ENCODE measurements at regions of chr2 and their contacts with region 1.

Region 1: DNA sequence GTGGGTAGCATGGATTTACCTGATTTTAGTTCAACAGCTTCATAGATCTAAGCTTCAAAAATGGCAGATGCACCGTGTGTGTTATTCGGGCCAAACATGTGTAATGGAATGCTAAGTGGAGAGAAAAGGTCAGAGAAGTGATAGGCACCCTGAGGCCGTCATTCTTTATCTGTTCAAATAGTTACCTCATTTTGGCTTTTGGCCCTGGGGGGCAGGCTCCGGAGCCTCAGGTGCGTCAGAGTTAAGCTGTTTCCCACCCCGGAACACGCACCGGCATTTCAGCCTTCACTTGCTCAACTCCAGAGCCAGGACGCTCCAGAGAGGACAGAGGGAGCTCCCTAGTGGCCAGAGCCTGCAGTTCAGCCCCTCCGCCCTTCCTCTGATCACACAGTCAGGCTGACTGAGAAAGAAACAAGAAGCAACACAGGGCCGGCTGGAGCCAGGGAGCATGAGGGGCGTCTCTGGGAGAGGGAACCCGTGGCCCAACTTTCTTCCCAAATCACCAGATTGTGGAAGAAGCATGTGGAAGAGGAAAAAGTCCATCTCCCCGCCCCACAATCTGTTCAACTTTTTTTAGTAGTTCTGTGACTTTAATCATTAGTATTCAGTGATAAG is 135.2 kb upstream of the EPC2 start:
- DNase-seq: peak; percentile 93
- ATAC-seq: peak; percentile 100
- H3K4me3 Mint-ChIP-seq: peak overlapping the region; percentile 56
- H3K27ac Mint-ChIP-seq: peak overlapping the region; percentile 20
- H3K4me1 Mint-ChIP-seq: peaks cover 23% of the 10 kb centered on the region
- H3K27me3 Mint-ChIP-seq: no peaks in the 10 kb centered on the region

Region 2: GRCh38 chr2:147937744-147938349 is 571.5 kb before region 1 on chr2:
- CTCF ChIA-PET with region 1: interaction called, 11 read pairs
- DNase-seq: no peak
- ATAC-seq: peak; percentile 47
- H3K4me3 Mint-ChIP-seq: no peak overlapping the region
- H3K27ac Mint-ChIP-seq: no peak overlapping the region
- H3K4me1 Mint-ChIP-seq: no peaks in the 10 kb centered on the region
- H3K27me3 Mint-ChIP-seq: no peaks in the 10 kb centered on the region

Region 3: DNA sequence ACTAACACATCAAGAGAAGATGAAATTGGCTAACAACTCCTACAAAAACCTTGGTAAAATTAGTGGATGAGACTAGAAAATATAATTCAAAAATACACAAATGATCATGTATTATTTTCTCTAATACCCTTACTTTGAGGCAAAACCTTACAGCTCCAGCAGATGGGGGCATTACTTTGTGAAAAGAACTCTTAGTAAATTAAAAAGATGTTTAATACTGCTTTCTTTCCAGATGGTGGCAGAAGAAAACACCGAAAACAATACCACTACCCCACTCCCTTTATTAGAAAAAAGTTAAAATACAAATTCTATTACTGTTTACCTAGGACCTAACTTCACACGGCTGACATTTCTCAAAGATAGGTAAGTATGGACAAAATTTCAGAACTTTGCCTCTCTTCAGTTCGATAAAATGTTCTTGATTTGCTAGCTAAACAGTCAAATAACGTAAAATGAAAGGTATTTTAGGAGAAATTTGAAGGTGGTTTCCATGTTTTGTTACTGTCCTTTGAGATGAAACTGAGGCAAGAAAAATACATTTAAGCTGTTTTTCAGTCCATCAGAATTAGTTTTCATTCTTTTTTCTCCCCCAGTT is 519.5 kb before region 1 on chr2:
- CTCF ChIA-PET with region 1: interaction called, 43 read pairs
- DNase-seq: no peak
- ATAC-seq: no peak
- H3K4me3 Mint-ChIP-seq: no peak overlapping the region
- H3K27ac Mint-ChIP-seq: no peak overlapping the region
- H3K4me1 Mint-ChIP-seq: peaks cover 7% of the 10 kb centered on the region
- H3K27me3 Mint-ChIP-seq: no peaks in the 10 kb centered on the region

Region 4: DNA sequence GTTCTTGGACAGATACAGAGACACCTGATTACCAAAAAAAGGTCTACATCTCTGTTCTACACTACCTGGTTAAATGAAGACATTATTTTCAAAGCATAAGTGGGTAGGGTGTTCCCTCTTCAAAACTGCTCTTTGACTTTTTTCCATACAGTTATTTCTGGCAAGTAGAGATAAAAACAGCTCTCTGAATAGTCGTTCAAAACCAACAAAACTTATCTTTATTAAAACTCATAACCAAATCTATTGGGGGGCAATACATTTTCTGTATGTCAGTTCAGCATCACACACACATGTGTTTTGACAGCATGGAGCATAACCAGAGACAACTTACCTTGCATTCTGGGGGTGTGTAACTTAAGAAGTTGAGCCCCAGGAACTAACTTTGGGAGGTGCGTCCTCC is 13.8 kb before region 1 on chr2:
- CTCF ChIA-PET with region 1: interaction called, 19 read pairs
- DNase-seq: no peak
- ATAC-seq: no peak
- H3K4me3 Mint-ChIP-seq: no peak overlapping the region
- H3K27ac Mint-ChIP-seq: no peak overlapping the region
- H3K4me1 Mint-ChIP-seq: no peaks in the 10 kb centered on the region
- H3K27me3 Mint-ChIP-seq: no peaks in the 10 kb centered on the region

Region 5: GRCh38 chr2:148524519-148524919 is 15.1 kb after region 1 on chr2:
- CTCF ChIA-PET with region 1: interaction called, 12 read pairs
- DNase-seq: peak; percentile 75
- ATAC-seq: peak; percentile 90
- H3K4me3 Mint-ChIP-seq: no peak overlapping the region
- H3K27ac Mint-ChIP-seq: peak overlapping the region; percentile 66
- H3K4me1 Mint-ChIP-seq: peaks cover 45% of the 10 kb centered on the region
- H3K27me3 Mint-ChIP-seq: no peaks in the 10 kb centered on the region

Region 6: DNA sequence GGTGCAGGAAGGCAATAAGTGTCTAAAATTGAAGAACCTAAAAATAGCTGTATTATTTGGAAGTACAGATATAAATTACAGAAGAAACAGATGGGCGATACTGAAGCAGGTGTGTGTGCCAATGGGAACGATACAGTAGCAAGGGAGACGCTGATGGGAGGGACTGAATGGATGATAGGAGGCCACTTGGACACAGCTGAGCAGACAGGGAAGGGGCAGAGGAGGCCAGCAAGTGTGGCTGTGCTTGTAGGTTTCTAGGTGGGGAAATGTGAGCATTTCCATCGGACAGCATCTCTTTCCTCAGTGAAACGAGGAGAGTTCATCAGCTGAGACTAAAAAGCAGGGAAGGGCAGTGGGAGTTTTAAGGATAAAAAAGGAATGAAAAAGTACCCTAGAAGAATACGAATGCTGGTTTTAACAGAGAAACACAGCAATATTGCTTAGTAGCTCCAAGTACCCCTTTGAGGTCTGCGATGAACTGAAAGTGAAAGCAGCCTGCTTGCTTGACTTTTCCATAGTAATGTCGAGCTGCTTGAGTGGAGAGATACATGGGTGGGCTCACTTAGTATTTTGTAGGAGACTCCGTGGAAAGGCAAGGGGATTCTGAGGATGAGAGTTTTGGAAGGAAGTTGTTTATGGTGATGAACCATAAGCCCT is 43.4 kb after region 1 on chr2:
- CTCF ChIA-PET with region 1: interaction called, 15 read pairs
- DNase-seq: peak; percentile 58
- ATAC-seq: peak; percentile 92
- H3K4me3 Mint-ChIP-seq: no peak overlapping the region
- H3K27ac Mint-ChIP-seq: no peak overlapping the region
- H3K4me1 Mint-ChIP-seq: no peaks in the 10 kb centered on the region
- H3K27me3 Mint-ChIP-seq: no peaks in the 10 kb centered on the region

Region 7: GRCh38 chr2:148989882-148990493 is 480.6 kb after region 1 on chr2:
- CTCF ChIA-PET with region 1: interaction called, 10 read pairs
- DNase-seq: peak; percentile 69
- ATAC-seq: peak; percentile 79
- H3K4me3 Mint-ChIP-seq: no peak overlapping the region
- H3K27ac Mint-ChIP-seq: no peak overlapping the region
- H3K4me1 Mint-ChIP-seq: peaks cover 2% of the 10 kb centered on the region
- H3K27me3 Mint-ChIP-seq: no peaks in the 10 kb centered on the region

Measured in activated CD8-positive, alpha-beta memory T cell treated with anti-CD3 and anti-CD28 coated beads, Interleukin-2, amount 10 ng/mL, durations not matched to agents 7 days and 5 days (primary cell).